ENCODE measurements at regions of chr2 and their contacts with region 1.

Region 1: GRCh38 chr2:229921892-229922445 is at the start of gene TRIP12:
- DNase-seq: peak; percentile 77 to 95 (median 86)
- ATAC-seq: peak; percentile 74
- H3K4me3 ChIP-seq: peak within 1 kb of the TSS; percentile 85
- H3K4me3 Mint-ChIP-seq: peak within 1 kb of the TSS; percentile 98
- H3K27ac ChIP-seq: peak within 1 kb of the TSS; percentile 97 to 98
- H3K27ac Mint-ChIP-seq: peak within 1 kb of the TSS; percentile 95
- H3K4me1 ChIP-seq: peaks cover 28% of the 10 kb centered on the region
- H3K4me1 Mint-ChIP-seq: peaks cover 55% of the 10 kb centered on the region
- H3K27me3 ChIP-seq: no peaks in the 10 kb centered on the region
- H3K27me3 Mint-ChIP-seq: peaks cover 5% of the 10 kb centered on the region
- CTCF ChIP-seq: no peak
- total RNA-seq, gene TRIP12: 151 to 178 TPM

Region 2: GRCh38 chr2:229835596-229836283 is 86.2 kb before region 1 on chr2:
- CTCF ChIA-PET with region 1: no interaction called
- POLR2A ChIA-PET with region 1: interaction called, 22 read pairs
- intact Hi-C with region 1: no loop called
- DNase-seq: peak in 3 of 14 experiments; percentile 71 to 79 (median 73)
- ATAC-seq: peak; percentile 87
- H3K4me3 ChIP-seq: no peak overlapping the region
- H3K4me3 Mint-ChIP-seq: peak overlapping the region; percentile 46
- H3K27ac ChIP-seq: no peak overlapping the region
- H3K27ac Mint-ChIP-seq: peak overlapping the region; percentile 72
- H3K4me1 ChIP-seq: peaks cover 21% of the 10 kb centered on the region
- H3K4me1 Mint-ChIP-seq: peaks cover 83% of the 10 kb centered on the region
- H3K27me3 ChIP-seq: no peaks in the 10 kb centered on the region
- H3K27me3 Mint-ChIP-seq: no peaks in the 10 kb centered on the region
- CTCF ChIP-seq: no peak

Region 3: DNA sequence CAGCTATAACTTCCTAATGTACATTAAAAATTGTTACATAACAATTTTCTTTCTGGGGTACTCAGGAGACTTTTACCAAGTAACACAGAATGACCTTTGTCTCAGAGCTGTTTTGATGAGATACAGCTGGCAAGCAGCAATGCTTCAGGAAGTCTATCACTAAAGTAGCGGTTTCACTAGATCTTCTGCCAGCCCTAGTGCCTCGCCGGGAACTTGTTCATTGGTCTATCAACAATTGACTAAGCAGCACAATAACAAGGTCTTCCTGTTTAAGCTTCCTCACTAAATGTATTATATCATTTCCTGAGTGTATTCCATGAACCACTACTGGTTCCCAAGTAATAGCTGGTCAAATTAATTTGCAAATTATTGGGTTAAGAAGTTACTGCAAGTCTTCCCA is 69.4 kb before region 1 on chr2:
- CTCF ChIA-PET with region 1: no interaction called
- POLR2A ChIA-PET with region 1: interaction called, 12 read pairs
- intact Hi-C with region 1: loop called in 1 of 2 experiments (anchors 5 kb)
- DNase-seq: peak; percentile 23 to 80 (median 56)
- ATAC-seq: peak; percentile 91
- H3K4me3 ChIP-seq: no peak overlapping the region
- H3K4me3 Mint-ChIP-seq: peak overlapping the region; percentile 69
- H3K27ac ChIP-seq: peak overlapping the region; percentile 2 to 19
- H3K27ac Mint-ChIP-seq: peak overlapping the region; percentile 90
- H3K4me1 ChIP-seq: peaks cover 30% of the 10 kb centered on the region
- H3K4me1 Mint-ChIP-seq: peaks cover 87% of the 10 kb centered on the region
- H3K27me3 ChIP-seq: no peaks in the 10 kb centered on the region
- H3K27me3 Mint-ChIP-seq: no peaks in the 10 kb centered on the region
- CTCF ChIP-seq: no peak

Region 4: DNA sequence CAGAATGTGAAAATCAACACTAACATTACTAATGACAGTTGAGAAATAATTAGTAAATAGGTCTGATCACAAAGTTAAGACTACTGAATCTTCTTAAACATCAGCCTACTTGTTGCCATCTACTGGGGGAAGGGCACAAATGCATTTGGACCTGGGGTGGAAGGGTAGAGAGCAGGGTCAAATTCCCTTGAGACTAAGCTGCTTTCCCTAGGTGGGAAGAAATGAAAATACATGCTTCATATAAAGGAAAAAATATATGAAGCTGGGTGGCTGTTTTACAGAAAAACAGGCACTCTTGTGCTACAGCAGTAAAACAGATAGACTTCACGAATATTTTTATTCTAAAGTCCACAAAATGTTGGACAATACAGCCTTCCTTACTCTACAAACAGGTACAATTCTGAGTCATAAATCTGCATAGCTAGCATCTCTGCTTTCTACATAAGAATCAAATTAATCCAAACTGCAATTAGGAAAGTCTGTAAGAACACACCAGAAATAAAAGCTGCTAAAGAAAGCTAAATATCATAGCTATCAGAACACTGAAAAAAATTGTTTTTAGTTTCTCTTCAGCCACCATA is 11.0 kb before region 1 on chr2:
- CTCF ChIA-PET with region 1: interaction called, 9 read pairs
- POLR2A ChIA-PET with region 1: interaction called, 22 read pairs
- intact Hi-C with region 1: no loop called
- DNase-seq: peak in 5 of 14 experiments; percentile 19 to 67 (median 53)
- ATAC-seq: peak; percentile 75
- H3K4me3 ChIP-seq: no peak overlapping the region
- H3K4me3 Mint-ChIP-seq: peak overlapping the region; percentile 6
- H3K27ac ChIP-seq: peak overlapping the region; percentile 9 to 21
- H3K27ac Mint-ChIP-seq: peak overlapping the region; percentile 70
- H3K4me1 ChIP-seq: peaks cover 17% of the 10 kb centered on the region
- H3K4me1 Mint-ChIP-seq: peaks cover 66% of the 10 kb centered on the region
- H3K27me3 ChIP-seq: no peaks in the 10 kb centered on the region
- H3K27me3 Mint-ChIP-seq: no peaks in the 10 kb centered on the region
- CTCF ChIP-seq: peak; percentile 69